BJ (cell line): ENCODE measurements at regions of chr10 and their contacts with region 1.

Region 1: DNA sequence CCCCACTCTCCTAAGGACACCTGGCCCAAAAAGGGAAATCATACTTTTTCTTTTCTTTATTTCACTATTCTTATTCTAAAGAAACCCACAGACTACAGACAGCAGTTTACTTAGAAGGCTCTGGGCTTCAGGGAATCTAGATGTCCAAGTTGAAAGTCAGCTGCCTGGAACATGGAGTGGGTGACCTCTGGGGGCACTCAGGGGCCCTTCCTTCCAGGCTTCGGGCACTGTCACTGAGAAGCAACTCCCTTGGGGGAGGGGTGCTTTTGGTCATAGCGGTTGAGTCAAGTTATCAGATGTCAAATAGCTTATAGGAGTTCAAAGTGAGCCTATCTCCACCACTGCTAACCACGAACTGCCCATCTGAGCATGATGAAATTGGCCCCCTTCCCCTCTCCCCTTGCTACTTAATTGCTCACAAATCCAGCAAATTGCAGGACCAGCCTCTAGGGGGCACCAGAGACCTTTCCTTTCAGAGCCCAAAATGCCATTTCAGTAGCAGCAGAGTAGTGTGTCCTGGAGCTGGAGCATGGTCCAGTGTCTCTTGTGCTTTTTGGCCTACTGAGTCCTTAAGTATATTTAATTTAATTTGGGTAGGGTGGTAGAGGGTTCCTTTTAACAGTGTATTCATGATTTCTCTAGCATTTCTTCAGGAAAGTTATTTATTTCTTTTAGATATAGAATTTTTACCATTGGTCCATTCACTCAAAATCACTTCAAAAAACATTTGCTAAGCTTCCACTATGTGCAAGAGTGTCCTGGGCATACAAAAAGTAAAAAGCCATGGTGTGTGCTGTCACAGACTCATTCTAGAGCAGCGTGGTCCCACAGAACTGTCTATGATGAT is 463.8 kb downstream of the KCNMA1 start:
- DNase-seq: no peak
- H3K4me3 ChIP-seq: no peak overlapping the region
- H3K27me3 ChIP-seq: no peaks in the 10 kb centered on the region
- CTCF ChIP-seq: peak; percentile 88

Region 2: DNA sequence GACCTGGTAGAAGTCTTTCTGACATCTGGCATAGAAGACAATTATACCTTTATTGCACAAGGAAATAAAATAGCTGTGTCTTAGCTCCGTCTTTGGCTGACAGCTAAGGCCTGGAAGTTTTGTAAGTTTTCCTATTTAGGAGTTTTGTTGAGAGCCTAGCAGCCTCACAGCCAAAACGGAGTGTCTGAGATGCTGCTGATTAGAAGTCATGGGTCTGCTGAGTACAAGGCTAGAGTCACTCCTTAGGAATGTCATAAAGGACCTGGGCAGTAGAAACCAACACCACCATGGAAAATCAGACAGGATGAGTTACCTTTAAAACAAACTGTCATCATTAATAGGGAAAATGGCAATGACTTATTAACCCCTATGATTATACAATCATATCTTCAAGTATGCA is 21.3 kb after region 1 on chr10:
- CTCF ChIA-PET with region 1: interaction called, 16 read pairs
- POLR2A ChIA-PET with region 1: interaction called, 6 read pairs
- DNase-seq: peak; percentile 81
- H3K4me3 ChIP-seq: no peak overlapping the region
- H3K27me3 ChIP-seq: no peaks in the 10 kb centered on the region
- CTCF ChIP-seq: no peak

Region 3: GRCh38 chr10:77391605-77392235 is 217.9 kb after region 1 on chr10:
- CTCF ChIA-PET with region 1: interaction called, 46 read pairs
- POLR2A ChIA-PET with region 1: no interaction called
- DNase-seq: peak; percentile 51
- H3K4me3 ChIP-seq: no peak overlapping the region
- H3K27me3 ChIP-seq: no peaks in the 10 kb centered on the region
- CTCF ChIP-seq: peak; percentile 80

Region 4: GRCh38 chr10:77456414-77456813 is 282.6 kb after region 1 on chr10:
- CTCF ChIA-PET with region 1: no interaction called
- POLR2A ChIA-PET with region 1: no interaction called
- DNase-seq: no peak
- H3K4me3 ChIP-seq: no peak overlapping the region
- H3K27me3 ChIP-seq: no peaks in the 10 kb centered on the region
- CTCF ChIP-seq: no peak

Region 5: GRCh38 chr10:77504873-77505257 is 331.0 kb after region 1 on chr10:
- CTCF ChIA-PET with region 1: interaction called, 14 read pairs
- POLR2A ChIA-PET with region 1: no interaction called
- DNase-seq: no peak
- H3K4me3 ChIP-seq: no peak overlapping the region
- H3K27me3 ChIP-seq: no peaks in the 10 kb centered on the region
- CTCF ChIP-seq: no peak